ENCODE measurements at regions of chr7 and their contacts with region 1.

Region 1: DNA sequence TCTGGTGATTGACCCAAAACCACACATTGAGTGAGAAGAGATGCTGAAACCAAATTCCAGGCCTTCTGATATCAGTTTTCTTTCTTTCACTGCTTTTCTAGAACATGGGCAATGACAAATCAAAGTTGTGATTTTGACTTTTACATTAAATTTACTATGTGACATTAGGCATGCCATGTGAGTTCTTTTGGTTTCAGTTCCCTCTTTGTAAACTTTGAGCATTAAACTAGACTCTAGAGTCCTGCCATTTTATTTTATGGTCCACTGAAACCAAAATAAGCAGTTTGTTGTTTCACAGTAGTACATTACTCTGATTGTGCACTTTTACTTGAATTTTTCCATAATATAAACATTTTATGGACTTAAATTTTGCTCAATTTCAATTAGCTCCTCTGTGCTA is 381.1 kb upstream of the SEMA3D start:
- DNase-seq: no peak

Region 2: DNA sequence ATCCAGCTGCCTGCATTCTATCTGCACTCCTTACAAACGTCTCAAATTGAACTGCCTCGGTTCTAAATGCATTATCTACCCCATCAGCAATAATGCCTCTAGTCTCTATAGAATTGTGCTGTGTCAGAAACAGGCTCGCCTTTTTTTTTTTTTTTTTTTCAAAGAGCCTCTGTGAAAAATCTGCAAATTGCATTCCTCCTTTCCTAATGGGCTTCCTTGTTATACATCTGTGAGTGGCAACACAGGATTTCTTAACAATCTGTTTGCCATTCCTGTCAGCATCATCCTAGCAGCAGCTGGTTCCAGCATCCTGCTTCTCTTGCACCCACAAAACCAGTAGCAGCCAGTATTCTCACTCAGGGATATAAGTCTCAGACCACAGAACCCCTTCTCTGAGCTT is 32.4 kb after region 1 on chr7:
- CTCF ChIA-PET with region 1: no interaction called
- POLR2A ChIA-PET with region 1: no interaction called
- DNase-seq: no peak

Region 3: DNA sequence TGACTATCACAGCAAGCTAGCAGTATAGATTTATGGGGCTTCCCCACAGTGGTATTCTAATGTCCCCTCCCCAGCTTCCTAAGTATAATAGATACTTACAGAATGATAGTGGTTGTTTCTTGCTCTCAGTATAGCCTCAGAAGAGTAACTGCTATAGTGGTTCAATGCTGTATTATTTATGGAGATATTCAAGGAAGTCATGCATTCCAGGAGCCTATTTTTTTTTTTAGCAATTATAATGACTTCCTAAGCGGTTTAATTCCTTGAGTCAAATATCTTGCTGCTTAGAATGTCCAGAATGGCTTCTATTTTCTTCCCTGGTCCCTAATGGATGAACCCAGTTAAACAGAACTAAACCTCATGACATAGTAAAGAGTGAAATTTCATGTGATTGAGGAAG is 70.4 kb after region 1 on chr7:
- CTCF ChIA-PET with region 1: interaction called, 10 read pairs
- POLR2A ChIA-PET with region 1: no interaction called
- DNase-seq: no peak

Measured in HEK293T (cell line).